ENCODE measurements at regions of chr2 and their contacts with region 1.

Region 1: DNA sequence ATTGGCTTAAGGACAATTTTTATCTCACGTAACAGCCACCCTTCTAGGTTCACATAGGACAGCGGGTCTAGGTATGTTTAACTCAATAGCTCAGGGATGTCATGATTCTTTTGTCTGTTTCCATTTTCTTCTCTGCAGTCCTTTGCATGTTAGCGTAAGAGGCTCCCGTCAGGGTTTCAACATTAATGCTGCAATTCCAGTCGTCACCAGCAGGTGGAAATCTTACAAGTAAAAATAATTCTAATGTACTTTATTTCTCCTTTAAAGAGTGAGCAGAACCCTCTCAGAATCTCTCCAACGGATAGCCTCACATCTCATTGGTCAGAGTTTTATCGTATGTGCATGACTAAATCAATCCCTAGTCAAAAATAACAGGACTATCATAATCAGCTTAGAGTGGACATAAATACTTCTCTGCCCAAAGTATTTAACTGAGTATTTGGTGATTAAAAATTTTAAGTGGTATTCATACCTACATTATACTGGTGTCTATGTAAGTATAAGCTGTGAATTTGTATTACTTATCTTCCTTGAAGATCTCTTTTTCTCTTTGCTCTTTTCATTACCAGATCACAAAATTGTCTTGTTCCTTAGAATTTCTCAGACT is 487.2 kb upstream of the GCFC2 start:
- DNase-seq: peak; percentile 78
- H3K4me3 Mint-ChIP-seq: no peak overlapping the region
- H3K27ac Mint-ChIP-seq: no peak overlapping the region
- H3K4me1 Mint-ChIP-seq: no peaks in the 10 kb centered on the region
- H3K27me3 Mint-ChIP-seq: no peaks in the 10 kb centered on the region
- CTCF ChIP-seq: peak; percentile 56

Region 2: DNA sequence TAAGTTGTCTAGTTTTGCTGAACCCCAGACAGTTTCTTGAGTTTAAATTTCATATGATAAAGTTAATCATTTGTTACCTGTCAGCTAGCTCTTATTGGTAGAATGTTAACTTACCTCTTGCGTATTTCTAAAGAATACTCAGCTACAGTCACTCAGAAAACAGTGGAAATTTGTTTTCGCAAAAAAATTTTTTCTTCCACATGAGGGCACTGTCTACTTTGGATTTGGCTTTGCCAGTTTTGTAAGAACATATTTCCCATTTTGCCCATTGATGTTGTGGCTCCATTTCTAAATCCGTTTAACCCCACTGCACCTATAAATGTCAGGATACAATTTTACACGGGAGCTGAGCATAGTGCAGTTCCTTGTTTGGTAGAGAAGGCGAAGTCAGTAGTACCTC is 468.1 kb before region 1 on chr2:
- CTCF ChIA-PET with region 1: interaction called, 3 read pairs
- POLR2A ChIA-PET with region 1: no interaction called
- intact Hi-C with region 1: loop called (anchors 10 kb)
- DNase-seq: peak; percentile 22
- H3K4me3 Mint-ChIP-seq: no peak overlapping the region
- H3K27ac Mint-ChIP-seq: no peak overlapping the region
- H3K4me1 Mint-ChIP-seq: no peaks in the 10 kb centered on the region
- H3K27me3 Mint-ChIP-seq: peaks cover 23% of the 10 kb centered on the region
- CTCF ChIP-seq: peak; percentile 29

Region 3: GRCh38 chr2:76169276-76170008 is 28.5 kb before region 1 on chr2:
- CTCF ChIA-PET with region 1: interaction called, 15 read pairs
- POLR2A ChIA-PET with region 1: no interaction called
- intact Hi-C with region 1: no loop called
- DNase-seq: no peak
- H3K4me3 Mint-ChIP-seq: no peak overlapping the region
- H3K27ac Mint-ChIP-seq: no peak overlapping the region
- H3K4me1 Mint-ChIP-seq: no peaks in the 10 kb centered on the region
- H3K27me3 Mint-ChIP-seq: no peaks in the 10 kb centered on the region
- CTCF ChIP-seq: no peak

Region 4: DNA sequence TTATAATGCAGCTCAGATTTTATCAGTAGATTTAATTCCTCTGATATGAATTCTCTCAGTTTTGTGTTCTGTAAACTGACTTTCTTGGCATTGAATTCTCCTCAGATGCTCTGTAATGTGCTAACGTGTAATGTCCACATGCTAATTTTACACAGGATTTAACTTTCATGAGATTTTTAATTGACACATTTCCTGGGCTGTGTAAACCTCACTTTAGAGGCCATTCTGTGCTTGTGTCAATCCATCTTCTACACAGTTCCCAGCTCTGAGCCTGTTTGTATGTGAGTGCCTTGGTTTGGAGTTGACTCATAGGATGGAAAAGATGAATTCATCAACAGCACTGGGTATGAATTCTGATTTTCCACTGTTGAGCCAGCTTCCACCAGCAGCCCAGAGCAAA is 10.5 kb before region 1 on chr2:
- CTCF ChIA-PET with region 1: interaction called, 11 read pairs
- POLR2A ChIA-PET with region 1: no interaction called
- intact Hi-C with region 1: no loop called
- DNase-seq: no peak
- H3K4me3 Mint-ChIP-seq: no peak overlapping the region
- H3K27ac Mint-ChIP-seq: no peak overlapping the region
- H3K4me1 Mint-ChIP-seq: peaks cover 10% of the 10 kb centered on the region
- H3K27me3 Mint-ChIP-seq: peaks cover 6% of the 10 kb centered on the region
- CTCF ChIP-seq: no peak

Region 5: DNA sequence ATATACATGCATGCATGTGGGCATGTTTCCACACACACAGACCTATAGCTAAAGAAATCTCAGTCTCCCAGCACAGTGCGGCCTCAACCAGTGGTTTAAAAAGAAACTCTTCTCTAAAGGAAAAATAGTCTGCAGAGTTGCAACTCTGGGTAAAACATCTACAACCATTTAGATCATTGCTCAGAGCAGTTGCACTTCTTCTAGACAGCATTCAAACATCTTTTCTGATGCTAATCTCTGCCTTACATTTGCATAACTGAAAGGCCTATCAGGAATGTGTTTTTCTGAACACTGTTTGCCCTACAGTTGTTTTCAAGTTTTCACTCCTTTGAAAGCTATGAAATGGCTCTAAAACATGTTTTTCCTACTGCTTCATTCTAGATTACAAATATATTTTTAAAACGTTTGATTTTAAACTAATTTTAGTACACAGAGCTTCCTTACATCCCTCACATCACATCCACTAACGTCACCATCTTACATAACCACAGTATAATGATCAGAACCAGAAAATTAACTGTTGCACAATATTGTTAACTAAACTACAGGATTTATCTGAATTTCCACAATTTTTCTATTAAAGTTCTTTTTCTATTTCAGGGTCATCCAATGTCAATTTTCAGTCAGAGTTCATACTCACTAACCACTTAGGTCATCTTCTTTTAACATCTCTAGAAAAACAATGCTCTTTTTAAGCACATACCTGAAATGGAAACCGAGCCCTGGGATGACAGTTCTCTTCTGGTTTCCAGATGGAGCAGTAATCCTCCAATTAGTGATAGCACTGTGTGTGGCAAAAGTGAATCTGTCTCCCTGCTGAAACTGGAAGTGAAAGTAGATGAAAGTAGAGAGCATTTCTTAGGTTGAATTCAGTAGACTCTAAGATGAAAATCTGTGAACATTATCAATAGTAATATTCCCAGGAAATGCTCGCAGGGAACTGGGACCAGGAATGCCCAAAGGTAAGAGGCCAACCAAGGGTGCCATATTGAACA is 14.3 kb after region 1 on chr2:
- CTCF ChIA-PET with region 1: interaction called, 22 read pairs
- POLR2A ChIA-PET with region 1: no interaction called
- intact Hi-C with region 1: no loop called
- DNase-seq: no peak
- H3K4me3 Mint-ChIP-seq: no peak overlapping the region
- H3K27ac Mint-ChIP-seq: no peak overlapping the region
- H3K4me1 Mint-ChIP-seq: no peaks in the 10 kb centered on the region
- H3K27me3 Mint-ChIP-seq: no peaks in the 10 kb centered on the region
- CTCF ChIP-seq: no peak

Region 6: DNA sequence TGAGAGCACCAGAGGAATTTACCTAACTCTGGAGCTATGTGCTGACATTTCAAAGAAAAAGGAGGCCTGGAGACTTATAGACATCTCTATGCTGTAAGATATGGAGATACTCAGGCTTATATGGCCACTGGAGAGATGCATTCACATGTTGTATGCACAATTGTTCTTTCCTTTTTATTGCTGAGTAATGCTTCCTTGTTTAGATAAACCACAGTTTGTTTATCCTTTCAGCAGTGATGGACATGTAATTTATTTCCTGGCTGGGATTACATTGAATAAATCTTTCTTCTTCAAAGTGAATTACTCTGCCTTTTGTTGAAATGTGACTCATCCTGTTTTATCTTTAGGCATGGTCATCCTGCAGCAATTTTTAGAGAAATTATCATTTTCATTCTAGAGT is 229.5 kb after region 1 on chr2:
- CTCF ChIA-PET with region 1: no interaction called
- POLR2A ChIA-PET with region 1: no interaction called
- intact Hi-C with region 1: no loop called
- DNase-seq: no peak
- H3K4me3 Mint-ChIP-seq: no peak overlapping the region
- H3K27ac Mint-ChIP-seq: no peak overlapping the region
- H3K4me1 Mint-ChIP-seq: peaks cover 7% of the 10 kb centered on the region
- H3K27me3 Mint-ChIP-seq: peaks cover 38% of the 10 kb centered on the region
- CTCF ChIP-seq: no peak

Measured in MCF 10A (cell line).